ENCODE measurements at regions of chr18 and their contacts with region 1.

Region 1: DNA sequence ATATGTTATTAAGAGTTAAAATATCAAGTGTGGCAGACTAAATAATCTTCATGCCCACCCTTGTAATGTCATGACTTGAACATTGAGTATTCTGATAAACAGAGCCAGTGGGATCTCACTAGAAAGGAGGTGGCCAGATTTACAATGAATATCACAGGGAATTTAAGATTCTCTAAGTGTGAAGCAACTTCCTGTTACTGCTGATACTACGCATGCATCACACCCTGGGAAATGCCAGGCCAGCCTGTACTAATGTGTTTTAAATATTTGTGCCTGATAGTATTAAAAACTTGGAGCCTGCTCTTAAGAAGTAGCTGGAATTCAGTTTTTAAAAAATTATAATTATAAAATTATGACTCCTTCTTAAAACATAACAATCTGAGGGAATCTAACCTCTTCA is 148.3 kb downstream of the LAMA3 start:
- DNase-seq: no peak
- ATAC-seq: no peak
- H3K4me3 ChIP-seq: no peak overlapping the region
- H3K27ac ChIP-seq: no peak overlapping the region
- H3K4me1 ChIP-seq: no peaks in the 10 kb centered on the region
- H3K27me3 ChIP-seq: no peaks in the 10 kb centered on the region
- CTCF ChIP-seq: no peak
- POLR2A ChIP-seq: no peak

Region 2: GRCh38 chr18:23703057-23703986 is 134.3 kb before region 1 on chr18:
- in situ Hi-C with region 1: no loop called
- intact Hi-C with region 1: no loop called
- DNase-seq: no peak
- ATAC-seq: peak in 1 of 2 donors; percentile 50
- H3K4me3 ChIP-seq: no peak overlapping the region
- H3K27ac ChIP-seq: no peak overlapping the region
- H3K4me1 ChIP-seq: no peaks in the 10 kb centered on the region
- H3K27me3 ChIP-seq: no peaks in the 10 kb centered on the region
- CTCF ChIP-seq: peak; percentile 18 to 60 (median 44)
- POLR2A ChIP-seq: no peak

Region 3: DNA sequence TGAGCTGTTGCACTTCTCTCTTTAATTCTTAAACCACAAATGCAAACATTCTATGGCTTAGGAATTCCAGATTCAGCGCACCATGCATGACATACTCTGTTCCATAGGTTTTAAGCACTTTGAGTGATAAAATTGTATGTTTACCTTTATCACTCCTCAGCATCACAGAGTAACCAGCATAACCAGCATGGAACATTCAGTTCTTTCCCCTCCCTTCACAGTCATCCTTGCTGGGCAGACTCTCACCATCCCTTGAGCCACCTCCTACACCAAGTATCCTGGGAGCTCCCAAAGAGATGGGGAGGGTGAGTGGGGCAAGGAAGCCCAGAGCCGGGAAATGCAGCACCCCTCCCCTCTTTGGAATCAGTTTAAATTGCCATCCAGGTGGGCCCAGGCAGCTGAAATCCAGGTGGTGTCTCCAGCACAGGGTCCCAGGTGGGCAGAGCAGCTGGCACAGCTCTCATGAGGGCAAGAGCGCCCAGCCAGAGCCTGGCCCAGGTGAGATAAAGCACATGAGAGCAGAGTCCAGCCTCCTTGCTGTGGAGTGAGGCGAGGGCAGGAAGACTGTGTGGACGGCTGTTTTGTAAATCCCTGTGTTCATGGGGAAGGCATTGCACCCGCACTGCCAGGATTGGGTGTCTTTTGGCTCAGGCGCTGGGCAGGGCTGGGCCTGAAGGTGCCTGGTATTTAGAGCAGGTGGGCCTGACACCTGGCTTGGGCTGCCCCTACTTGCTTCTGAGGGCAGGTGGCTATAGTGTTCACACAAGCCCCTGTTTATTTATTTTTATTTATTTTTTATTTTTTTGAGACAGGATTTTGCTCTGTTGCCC is 111.5 kb before region 1 on chr18:
- in situ Hi-C with region 1: no loop called
- intact Hi-C with region 1: no loop called
- DNase-seq: no peak
- ATAC-seq: no peak
- H3K4me3 ChIP-seq: no peak overlapping the region
- H3K27ac ChIP-seq: no peak overlapping the region
- H3K4me1 ChIP-seq: no peaks in the 10 kb centered on the region
- H3K27me3 ChIP-seq: peaks cover 0 to 2% (median 0%) of the 10 kb centered on the region in 3 donors
- CTCF ChIP-seq: no peak
- POLR2A ChIP-seq: no peak

Region 4: DNA sequence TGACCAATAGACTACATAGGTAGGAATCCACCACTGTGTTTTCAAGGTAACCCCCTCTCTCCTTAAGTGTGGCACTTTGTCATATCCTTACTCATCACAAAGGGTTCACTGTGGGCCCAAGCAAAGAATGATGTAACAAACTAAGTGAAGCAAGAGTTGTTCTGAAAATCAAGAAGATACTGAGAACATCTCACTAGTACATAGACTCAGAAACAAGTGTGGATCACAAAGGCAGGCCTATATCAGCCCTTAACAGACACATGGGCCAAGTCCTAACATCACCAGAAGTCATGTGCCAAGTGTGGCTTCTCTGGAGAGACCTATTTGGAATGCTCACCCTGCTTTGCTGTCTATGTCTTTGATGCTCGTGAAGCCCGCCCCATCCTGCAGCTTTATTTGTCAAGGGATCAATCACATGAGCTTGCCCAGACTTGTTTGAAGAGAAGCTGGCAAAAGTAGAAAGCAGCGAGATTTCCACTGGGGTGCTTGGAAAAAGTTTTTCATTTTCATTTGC is 45.7 kb after region 1 on chr18:
- in situ Hi-C with region 1: no loop called
- intact Hi-C with region 1: loop called (anchors 10 kb)
- DNase-seq: peak; percentile 35 to 67
- ATAC-seq: peak; percentile 75 to 81
- H3K4me3 ChIP-seq: no peak overlapping the region
- H3K27ac ChIP-seq: peak overlapping the region; percentile 26 to 50 (median 42)
- H3K4me1 ChIP-seq: no peaks in the 10 kb centered on the region
- H3K27me3 ChIP-seq: no peaks in the 10 kb centered on the region
- CTCF ChIP-seq: no peak
- POLR2A ChIP-seq: peak in 1 of 2 donors; percentile 11

Measured in gastrocnemius medialis (tissue), 4 donors.